CD8-positive, alpha-beta memory T cell (primary cell): ENCODE measurements at regions of chr3 and their contacts with region 1.

Region 1: DNA sequence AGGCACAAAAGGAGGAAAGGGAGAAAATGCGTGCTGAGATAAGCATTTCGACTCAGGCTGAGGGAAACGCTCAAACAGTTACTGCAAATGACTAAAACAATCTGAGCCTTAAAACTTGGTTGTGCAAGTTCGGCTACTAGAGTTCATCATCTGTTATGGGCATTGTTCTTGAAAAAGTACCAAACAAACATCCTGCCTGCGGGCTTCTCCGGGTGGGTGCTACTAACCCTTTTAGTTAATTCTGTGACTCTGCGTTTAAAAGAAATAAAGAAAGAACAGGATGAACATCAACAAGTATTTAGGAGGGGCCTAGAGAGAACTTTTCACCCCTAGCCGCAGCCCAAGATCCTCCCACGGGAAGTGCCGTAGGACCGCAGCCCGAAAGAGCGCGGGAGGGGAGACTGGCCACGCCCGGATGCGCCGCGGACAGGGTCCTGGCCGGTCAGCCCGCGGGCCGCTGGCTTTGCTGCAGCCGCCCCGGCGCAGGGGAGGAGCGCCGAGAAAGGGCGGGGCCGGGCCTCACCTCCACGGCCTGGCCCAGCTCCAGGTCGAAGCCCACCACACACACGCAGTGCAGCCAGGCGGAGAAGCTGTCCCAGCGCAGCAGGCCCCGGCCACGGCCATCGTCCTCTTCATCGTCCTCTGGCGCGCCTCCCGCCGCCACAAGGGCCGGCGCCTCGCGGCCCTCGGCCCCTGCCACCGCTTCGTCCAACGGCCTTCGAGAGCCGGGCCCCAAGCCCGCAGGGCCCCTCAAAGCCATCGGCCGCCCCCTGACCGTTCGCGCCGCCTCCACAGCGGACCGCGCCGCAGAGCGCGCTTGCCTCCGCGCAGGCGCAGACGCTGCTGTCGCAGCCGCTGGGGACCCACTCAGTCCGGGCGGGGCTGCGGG is at the start of gene DENND6A:
- DNase-seq: peak; percentile 95 to 97 (median 96)
- H3K4me3 ChIP-seq: peak within 1 kb of the TSS; percentile 69
- H3K4me3 Mint-ChIP-seq: peak within 1 kb of the TSS; percentile 84 to 96 (median 90)
- H3K27ac ChIP-seq: peak within 1 kb of the TSS; percentile 95
- H3K27ac Mint-ChIP-seq: peak within 1 kb of the TSS; percentile 86 to 97 (median 92)
- H3K4me1 ChIP-seq: peaks cover 37% of the 10 kb centered on the region
- H3K4me1 Mint-ChIP-seq: peaks cover 29 to 43% (median 36%) of the 10 kb centered on the region in 3 donors
- H3K27me3 ChIP-seq: no peaks in the 10 kb centered on the region
- H3K27me3 Mint-ChIP-seq: no peaks in the 10 kb centered on the region
- total RNA-seq, gene DENND6A: 12.5 to 15.5 TPM

Region 2: DNA sequence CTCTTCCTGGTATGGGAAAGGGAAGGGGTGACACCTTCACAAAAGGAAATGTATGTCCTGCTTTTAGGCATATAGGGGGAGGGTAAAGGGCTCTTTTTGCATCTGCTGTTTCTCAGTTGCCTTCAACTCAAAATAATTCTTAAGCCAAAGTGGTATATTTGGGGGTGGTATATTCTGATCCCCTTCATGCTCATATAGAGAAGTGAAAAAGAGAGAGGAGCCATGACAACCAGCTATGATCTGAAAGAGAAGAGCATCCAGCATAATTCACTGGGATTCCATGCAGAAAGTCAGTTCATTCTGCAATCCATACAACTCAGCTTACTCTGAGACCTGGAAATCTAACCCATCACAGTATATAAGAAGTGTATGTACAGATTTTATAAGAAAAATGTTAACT is 22.0 kb before region 1 on chr3:
- CTCF ChIA-PET with region 1: interaction called, 5 read pairs
- POLR2A ChIA-PET with region 1: interaction called, 16 read pairs
- DNase-seq: no peak
- H3K4me3 ChIP-seq: no peak overlapping the region
- H3K4me3 Mint-ChIP-seq: peak overlapping the region in 1 of 7 donors; percentile 83
- H3K27ac ChIP-seq: no peak overlapping the region
- H3K27ac Mint-ChIP-seq: peak overlapping the region in 7 of 8 donors; percentile 29 to 94 (median 85)
- H3K4me1 ChIP-seq: no peaks in the 10 kb centered on the region
- H3K4me1 Mint-ChIP-seq: peaks cover 34 to 45% (median 40%) of the 10 kb centered on the region in 3 donors
- H3K27me3 ChIP-seq: no peaks in the 10 kb centered on the region
- H3K27me3 Mint-ChIP-seq: no peaks in the 10 kb centered on the region

Region 3: DNA sequence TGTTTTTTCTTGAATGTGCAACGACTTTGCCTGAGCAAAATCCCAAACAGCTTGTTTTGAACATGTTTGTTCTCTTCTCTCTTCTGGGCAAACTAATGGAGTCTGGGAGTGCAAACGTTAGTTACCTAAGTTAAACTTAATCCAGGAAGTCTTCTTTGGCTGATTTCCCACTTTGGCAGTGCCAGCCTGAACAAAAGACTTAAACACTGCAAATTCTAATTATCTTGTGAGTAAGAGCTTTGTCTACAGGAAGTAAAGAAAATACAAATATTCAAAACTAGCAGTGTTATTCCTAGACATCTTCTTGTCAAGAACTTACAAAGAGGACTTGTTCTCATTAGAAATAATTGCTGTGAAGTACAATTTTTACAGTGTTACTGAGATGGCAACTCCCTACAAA is 17.1 kb after region 1 on chr3:
- CTCF ChIA-PET with region 1: no interaction called
- POLR2A ChIA-PET with region 1: no interaction called
- DNase-seq: no peak
- H3K4me3 ChIP-seq: no peak overlapping the region
- H3K4me3 Mint-ChIP-seq: no peak overlapping the region
- H3K27ac ChIP-seq: no peak overlapping the region
- H3K27ac Mint-ChIP-seq: no peak overlapping the region
- H3K4me1 ChIP-seq: no peaks in the 10 kb centered on the region
- H3K4me1 Mint-ChIP-seq: peaks cover 0 to 5% (median 0%) of the 10 kb centered on the region in 3 donors
- H3K27me3 ChIP-seq: no peaks in the 10 kb centered on the region
- H3K27me3 Mint-ChIP-seq: peaks cover 0 to 6% of the 10 kb centered on the region in 2 donors

Region 4: GRCh38 chr3:57755668-57756527 is 63.4 kb after region 1 on chr3 and contains the start of gene SLMAP:
- CTCF ChIA-PET with region 1: interaction called, 3 read pairs
- POLR2A ChIA-PET with region 1: interaction called, 14 read pairs
- DNase-seq: peak; percentile 92 to 97 (median 94)
- H3K4me3 ChIP-seq: peak within 1 kb of the TSS; percentile 73
- H3K4me3 Mint-ChIP-seq: peak within 1 kb of the TSS; percentile 93 to 98 (median 96)
- H3K27ac ChIP-seq: peak within 1 kb of the TSS; percentile 66
- H3K27ac Mint-ChIP-seq: peak within 1 kb of the TSS; percentile 68 to 98 (median 95)
- H3K4me1 ChIP-seq: peaks cover 37% of the 10 kb centered on the region
- H3K4me1 Mint-ChIP-seq: peaks cover 38 to 47% (median 41%) of the 10 kb centered on the region in 3 donors
- H3K27me3 ChIP-seq: no peaks in the 10 kb centered on the region
- H3K27me3 Mint-ChIP-seq: no peaks in the 10 kb centered on the region
- total RNA-seq, gene SLMAP: 55.8 to 57.8 TPM